ENCODE measurements at regions of chr1 and their contacts with region 1.

Region 1: GRCh38 chr1:223269006-223269405 is 95.0 kb downstream of the SUSD4 start:
- DNase-seq: no peak
- ATAC-seq: no peak
- H3K4me3 ChIP-seq: no peak overlapping the region
- H3K27ac ChIP-seq: no peak overlapping the region
- H3K4me1 ChIP-seq: no peaks in the 10 kb centered on the region
- H3K27me3 ChIP-seq: no peaks in the 10 kb centered on the region
- CTCF ChIP-seq: no peak

Region 2: GRCh38 chr1:223081181-223081994 is 187.6 kb before region 1 on chr1:
- intact Hi-C with region 1: no loop called
- DNase-seq: peak; percentile 79 to 91
- ATAC-seq: peak; percentile 96 to 99 (median 98)
- H3K4me3 ChIP-seq: peak overlapping the region; percentile 55
- H3K27ac ChIP-seq: peak overlapping the region; percentile 51
- H3K4me1 ChIP-seq: no peaks in the 10 kb centered on the region
- H3K27me3 ChIP-seq: no peaks in the 10 kb centered on the region
- CTCF ChIP-seq: peak; percentile 96

Region 3: DNA sequence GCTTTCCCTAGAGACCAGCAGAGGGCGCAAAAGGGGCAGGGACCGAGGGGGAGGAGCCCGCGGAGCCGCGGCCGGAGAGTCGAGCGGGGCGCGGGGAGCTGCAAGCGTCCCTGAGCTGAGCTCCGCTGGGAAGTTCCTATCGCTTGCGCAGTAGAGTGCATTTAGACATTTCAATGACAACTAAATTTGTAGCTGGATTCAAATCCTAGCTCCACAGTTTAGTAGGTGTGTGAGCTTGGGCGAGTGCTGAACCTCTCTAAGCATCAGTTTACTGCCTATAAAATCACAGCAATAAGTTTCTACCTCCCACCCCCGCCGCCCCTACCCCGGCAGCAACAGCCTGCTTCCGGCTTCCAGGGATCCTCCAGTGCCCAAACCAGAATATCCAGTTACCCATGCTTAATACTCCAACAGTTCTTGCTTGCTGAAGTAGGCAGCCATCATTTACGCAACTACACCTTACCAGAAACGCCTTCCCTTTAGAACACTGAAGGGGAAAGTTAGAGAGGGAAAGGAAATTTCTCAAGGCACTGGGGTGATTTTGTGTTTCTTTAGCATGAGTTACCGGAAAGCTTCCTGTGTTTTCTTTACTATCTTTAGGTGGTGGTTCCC is 135.1 kb before region 1 on chr1:
- intact Hi-C with region 1: no loop called
- DNase-seq: peak; percentile 84 to 91
- ATAC-seq: peak; percentile 83 to 89 (median 84)
- H3K4me3 ChIP-seq: peak overlapping the region; percentile 57
- H3K27ac ChIP-seq: peak overlapping the region; percentile 64
- H3K4me1 ChIP-seq: peaks cover 34% of the 10 kb centered on the region
- H3K27me3 ChIP-seq: no peaks in the 10 kb centered on the region
- CTCF ChIP-seq: peak; percentile 89

Region 4: GRCh38 chr1:223216531-223217205 is 52.3 kb before region 1 on chr1:
- intact Hi-C with region 1: loop called in 1 of 2 experiments (anchors 2 kb)
- DNase-seq: no peak
- ATAC-seq: no peak
- H3K4me3 ChIP-seq: no peak overlapping the region
- H3K27ac ChIP-seq: no peak overlapping the region
- H3K4me1 ChIP-seq: no peaks in the 10 kb centered on the region
- H3K27me3 ChIP-seq: no peaks in the 10 kb centered on the region
- CTCF ChIP-seq: no peak

Region 5: DNA sequence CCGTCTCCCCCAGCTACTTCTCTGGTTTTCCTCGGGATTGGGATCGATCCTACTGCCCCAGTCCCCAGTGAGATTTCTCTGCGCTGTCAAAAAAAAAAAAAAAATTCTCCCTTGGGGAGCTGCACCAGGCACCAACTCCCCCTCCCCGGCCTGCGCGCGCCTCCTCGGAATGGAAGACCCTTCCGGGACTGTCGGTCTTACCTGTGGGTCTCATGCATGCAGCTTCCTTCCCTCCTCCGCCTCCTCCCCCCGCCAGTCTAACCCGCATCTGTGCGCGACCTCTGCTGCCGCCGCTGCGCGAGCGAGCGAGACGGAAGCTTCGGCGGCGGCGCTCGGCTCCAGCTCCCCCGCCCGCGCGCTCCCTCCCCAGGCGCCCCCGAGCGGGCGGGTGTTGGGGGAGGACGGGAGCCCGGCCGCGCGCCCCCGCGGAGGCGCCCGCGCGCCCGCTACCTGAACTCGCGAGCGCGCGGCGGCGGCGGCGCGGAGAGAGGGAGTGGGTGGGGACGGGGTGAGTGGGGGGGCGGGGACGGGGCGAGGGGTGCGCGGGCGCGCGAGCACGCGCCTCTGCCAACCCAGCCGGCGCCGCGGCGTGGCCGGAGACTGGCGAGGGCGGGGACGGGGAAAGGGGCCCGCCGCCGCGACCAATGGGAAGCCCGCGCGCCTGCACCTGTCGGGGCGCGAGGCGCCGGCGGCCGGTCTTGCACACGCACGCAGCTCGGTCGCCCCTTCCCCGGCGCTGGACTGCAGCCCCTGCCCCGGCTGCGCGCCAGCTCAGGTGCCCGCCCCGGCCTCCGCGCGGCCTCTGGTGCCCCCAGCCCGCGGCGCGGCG is 95.1 kb after region 1 on chr1 and contains the start of gene SUSD4:
- intact Hi-C with region 1: loop called in 1 of 2 experiments (anchors 10 kb)
- DNase-seq: peak; percentile 33 to 59
- ATAC-seq: peak; percentile 70 to 90 (median 84)
- H3K4me3 ChIP-seq: peak within 1 kb of the TSS; percentile 68
- H3K27ac ChIP-seq: no peak within 1 kb of the TSS
- H3K4me1 ChIP-seq: peaks cover 7% of the 10 kb centered on the region
- H3K27me3 ChIP-seq: peaks cover 0 to 31% (median 0%) of the 10 kb centered on the region in 3 donors
- CTCF ChIP-seq: no peak
- total RNA-seq, gene SUSD4: 0.15 to 3.9 (median 1.4) TPM